Endothelial cell of umbilical vein (primary cell): ENCODE measurements at regions of chr6 and their contacts with region 1.

Region 1: DNA sequence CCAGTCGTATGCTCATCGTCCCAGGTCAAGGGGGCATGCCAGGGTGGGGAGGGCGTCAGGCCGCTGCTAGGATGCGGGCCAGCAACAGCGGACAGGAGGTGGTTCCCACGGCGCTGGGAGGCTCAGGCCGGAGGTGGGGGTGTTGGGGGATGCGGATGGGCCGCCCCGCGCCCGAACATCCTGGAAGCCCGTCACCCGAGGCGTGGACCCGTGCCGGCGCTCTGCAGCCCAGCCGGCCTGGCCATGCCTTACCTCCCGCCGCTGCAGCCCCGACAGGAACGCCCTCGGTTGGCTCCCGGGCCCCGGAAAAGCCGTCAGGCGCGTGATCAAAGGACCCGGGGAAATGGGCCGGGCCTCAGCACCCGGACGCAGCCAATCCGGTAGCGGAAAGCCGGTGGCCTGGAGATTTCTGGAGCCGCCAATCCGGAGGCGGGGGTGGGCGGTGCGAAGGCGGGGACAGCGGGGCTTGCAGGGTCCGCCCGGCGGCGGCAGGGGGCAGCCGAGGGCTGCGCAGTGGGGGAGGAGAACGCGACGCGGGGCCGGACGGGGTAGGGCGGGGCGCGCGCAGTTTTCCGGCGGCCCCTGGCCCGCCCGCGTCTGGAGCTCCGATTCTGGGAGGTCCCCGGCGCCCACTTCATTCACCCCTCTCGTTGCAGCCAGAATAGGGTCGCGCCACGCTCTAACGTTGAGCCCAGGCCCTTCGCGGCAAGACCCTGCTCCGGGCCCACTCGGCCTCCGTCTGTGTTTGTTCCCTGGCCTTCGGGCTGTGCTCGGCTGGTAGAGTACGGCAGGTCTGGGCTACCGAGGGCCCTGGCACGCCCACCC is at the start of gene SMIM29:
- DNase-seq: peak; percentile 90
- H3K4me3 ChIP-seq: peak within 1 kb of the TSS; percentile 66 to 88 (median 80)
- H3K27ac ChIP-seq: peak within 1 kb of the TSS; percentile 81
- H3K4me1 ChIP-seq: peaks cover 33% of the 10 kb centered on the region
- H3K27me3 ChIP-seq: no peaks in the 10 kb centered on the region
- CTCF ChIP-seq: peak; percentile 84 to 89
- POLR2A ChIP-seq: peak; percentile 86
- total RNA-seq, gene SMIM29: 37.3 and 37.6 TPM in 2 replicates

Region 2: GRCh38 chr6:34161857-34162515 is 87.0 kb before region 1 on chr6:
- CTCF ChIA-PET with region 1: interaction called, 34 read pairs
- POLR2A ChIA-PET with region 1: interaction called, 5 read pairs
- dilution Hi-C with region 1: no loop called
- intact Hi-C with region 1: loop called (anchors 1 kb)
- DNase-seq: no peak
- H3K4me3 ChIP-seq: no peak overlapping the region
- H3K27ac ChIP-seq: no peak overlapping the region
- H3K4me1 ChIP-seq: no peaks in the 10 kb centered on the region
- H3K27me3 ChIP-seq: no peaks in the 10 kb centered on the region
- CTCF ChIP-seq: no peak
- POLR2A ChIP-seq: no peak

Region 3: DNA sequence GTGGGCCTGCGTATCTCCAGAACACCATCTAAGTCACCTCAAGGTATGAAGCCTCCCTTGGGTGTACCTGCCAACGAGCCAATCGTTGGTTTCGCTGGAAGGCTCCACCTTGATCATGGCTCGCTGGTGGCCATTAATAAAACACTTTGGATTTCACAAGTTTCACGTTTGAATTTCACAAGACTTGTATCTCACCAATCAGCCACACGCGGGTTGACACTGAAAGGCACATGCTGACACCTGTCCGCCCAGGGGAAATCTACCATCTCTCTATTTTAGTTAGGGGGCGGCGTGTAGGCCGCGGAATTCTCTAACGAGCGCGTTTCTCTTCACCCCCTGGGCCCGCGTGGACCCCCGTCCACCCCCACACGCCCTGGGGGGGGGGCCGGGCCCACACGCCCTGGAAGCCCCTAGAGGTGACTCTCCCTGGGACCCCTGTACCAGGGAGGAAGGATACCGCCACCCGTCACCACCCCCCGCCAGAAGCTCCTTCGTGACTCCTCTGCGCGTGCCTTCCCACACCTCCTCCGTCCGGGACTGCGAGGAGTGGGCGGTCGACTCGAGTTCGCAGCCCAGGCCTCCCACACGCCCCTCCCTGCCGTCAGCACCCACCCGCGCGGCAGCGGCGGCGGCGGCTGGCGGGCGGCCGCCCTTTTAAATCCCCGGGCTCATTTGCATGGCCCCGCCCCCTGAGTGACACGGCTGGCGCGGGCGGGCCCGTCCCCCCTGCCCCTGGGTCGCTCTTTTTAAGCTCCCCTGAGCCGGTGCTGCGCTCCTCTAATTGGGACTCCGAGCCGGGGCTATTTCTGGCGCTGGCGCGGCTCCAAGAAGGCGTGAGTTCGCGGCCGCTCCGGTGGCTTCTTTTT is 12.6 kb before region 1 on chr6 and contains the start of gene HMGA1:
- CTCF ChIA-PET with region 1: interaction called, 8 read pairs
- POLR2A ChIA-PET with region 1: interaction called, 13 read pairs
- dilution Hi-C with region 1: no loop called
- intact Hi-C with region 1: loop called (anchors 1 kb)
- DNase-seq: peak; percentile 88
- H3K4me3 ChIP-seq: peak within 1 kb of the TSS; percentile 94 to 98 (median 97)
- H3K27ac ChIP-seq: peak within 1 kb of the TSS; percentile 91
- H3K4me1 ChIP-seq: peaks cover 40% of the 10 kb centered on the region
- H3K27me3 ChIP-seq: no peaks in the 10 kb centered on the region
- CTCF ChIP-seq: no peak
- POLR2A ChIP-seq: peak; percentile 98
- total RNA-seq, gene HMGA1: 1,031 and 1,108 TPM in 2 replicates

Region 4: GRCh38 chr6:34341481-34341971 is 92.6 kb after region 1 on chr6:
- CTCF ChIA-PET with region 1: interaction called, 10 read pairs
- POLR2A ChIA-PET with region 1: no interaction called
- dilution Hi-C with region 1: no loop called
- intact Hi-C with region 1: loop called (anchors 2 kb)
- DNase-seq: peak; percentile 84
- H3K4me3 ChIP-seq: no peak overlapping the region
- H3K27ac ChIP-seq: peak overlapping the region; percentile 46
- H3K4me1 ChIP-seq: peaks cover 56% of the 10 kb centered on the region
- H3K27me3 ChIP-seq: no peaks in the 10 kb centered on the region
- CTCF ChIP-seq: no peak
- POLR2A ChIP-seq: no peak

Region 5: GRCh38 chr6:34610819-34611477 is 362.0 kb after region 1 on chr6:
- CTCF ChIA-PET with region 1: interaction called, 11 read pairs
- POLR2A ChIA-PET with region 1: no interaction called
- dilution Hi-C with region 1: no loop called
- intact Hi-C with region 1: loop called (anchors 1 kb)
- DNase-seq: peak; percentile 51
- H3K4me3 ChIP-seq: no peak overlapping the region
- H3K27ac ChIP-seq: peak overlapping the region; percentile 65
- H3K4me1 ChIP-seq: peaks cover 10% of the 10 kb centered on the region
- H3K27me3 ChIP-seq: no peaks in the 10 kb centered on the region
- CTCF ChIP-seq: no peak
- POLR2A ChIP-seq: no peak